ENCODE measurements at regions of chr10 and their contacts with region 1.

Region 1: GRCh38 chr10:73848821-73849489 is 25.4 kb downstream of the CAMK2G start:
- DNase-seq: peak; percentile 87 to 92 (median 89)
- H3K4me3 ChIP-seq: no peak overlapping the region
- H3K4me3 Mint-ChIP-seq: peak overlapping the region in 5 of 8 donors; percentile 26 to 59 (median 27)
- H3K27ac ChIP-seq: peak overlapping the region; percentile 46
- H3K27ac Mint-ChIP-seq: peak overlapping the region; percentile 83 to 96 (median 94)
- H3K4me1 ChIP-seq: peaks cover 8% of the 10 kb centered on the region
- H3K4me1 Mint-ChIP-seq: peaks cover 14 to 28% (median 16%) of the 10 kb centered on the region in 4 donors
- H3K27me3 ChIP-seq: no peaks in the 10 kb centered on the region
- H3K27me3 Mint-ChIP-seq: no peaks in the 10 kb centered on the region

Region 2: DNA sequence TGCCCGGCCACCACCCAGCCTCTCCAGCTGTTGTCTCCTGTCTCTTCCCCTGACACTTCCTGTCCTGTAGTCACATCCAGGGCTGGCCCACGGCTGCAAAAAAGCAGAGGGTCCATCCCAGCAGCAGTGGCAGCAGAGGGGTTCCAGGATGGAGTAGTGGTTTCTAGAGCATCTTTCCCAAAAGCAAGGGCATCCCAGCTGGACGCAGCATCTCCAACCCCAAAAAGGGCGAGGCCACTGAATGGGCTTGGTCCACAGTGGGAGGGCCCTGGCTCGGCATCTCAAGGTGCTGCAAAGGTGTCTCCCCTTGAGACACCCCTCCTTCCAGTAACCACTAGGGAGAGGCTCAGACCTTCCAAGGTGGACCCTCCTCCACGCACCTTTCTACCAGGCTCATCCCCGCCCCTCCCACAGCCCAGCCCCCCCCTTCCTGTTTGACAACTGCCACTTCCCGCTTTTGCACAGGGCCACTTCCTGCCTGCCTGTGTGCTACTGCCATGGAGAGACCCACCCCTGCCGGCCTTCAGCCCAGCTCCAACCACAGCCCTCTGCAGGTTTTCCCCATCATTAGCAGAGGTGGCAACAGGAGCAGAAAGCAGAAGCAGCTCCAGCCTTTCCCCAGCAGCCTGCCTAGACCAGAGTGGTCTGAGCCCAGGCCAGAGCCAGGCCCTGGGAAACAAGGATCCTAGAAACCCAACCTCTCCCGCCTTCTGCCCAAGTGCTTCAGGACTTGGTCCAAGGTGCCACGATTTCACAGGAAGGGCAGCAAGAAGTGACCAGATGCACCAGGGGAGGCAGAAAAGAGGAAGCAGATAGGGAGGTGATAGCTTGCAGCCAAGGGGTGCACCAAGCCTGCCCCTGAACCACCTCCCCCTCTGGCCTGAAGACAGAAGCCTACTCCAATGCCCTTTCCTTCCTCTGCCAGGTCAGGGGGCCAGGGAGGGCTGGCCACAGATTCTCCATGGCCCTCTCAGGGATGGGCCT is 16.8 kb after region 1 on chr10:
- CTCF ChIA-PET with region 1: interaction called, 38 read pairs
- POLR2A ChIA-PET with region 1: interaction called, 16 read pairs
- intact Hi-C with region 1: no loop called
- DNase-seq: peak; percentile 31 to 61 (median 44)
- H3K4me3 ChIP-seq: peak overlapping the region; percentile 56 to 65
- H3K4me3 Mint-ChIP-seq: peak overlapping the region; percentile 84 to 93 (median 86)
- H3K27ac ChIP-seq: peak overlapping the region; percentile 64
- H3K27ac Mint-ChIP-seq: peak overlapping the region; percentile 88 to 98 (median 94)
- H3K4me1 ChIP-seq: peaks cover 87% of the 10 kb centered on the region
- H3K4me1 Mint-ChIP-seq: peaks cover 47 to 97% (median 81%) of the 10 kb centered on the region in 4 donors
- H3K27me3 ChIP-seq: no peaks in the 10 kb centered on the region
- H3K27me3 Mint-ChIP-seq: no peaks in the 10 kb centered on the region

Region 3: DNA sequence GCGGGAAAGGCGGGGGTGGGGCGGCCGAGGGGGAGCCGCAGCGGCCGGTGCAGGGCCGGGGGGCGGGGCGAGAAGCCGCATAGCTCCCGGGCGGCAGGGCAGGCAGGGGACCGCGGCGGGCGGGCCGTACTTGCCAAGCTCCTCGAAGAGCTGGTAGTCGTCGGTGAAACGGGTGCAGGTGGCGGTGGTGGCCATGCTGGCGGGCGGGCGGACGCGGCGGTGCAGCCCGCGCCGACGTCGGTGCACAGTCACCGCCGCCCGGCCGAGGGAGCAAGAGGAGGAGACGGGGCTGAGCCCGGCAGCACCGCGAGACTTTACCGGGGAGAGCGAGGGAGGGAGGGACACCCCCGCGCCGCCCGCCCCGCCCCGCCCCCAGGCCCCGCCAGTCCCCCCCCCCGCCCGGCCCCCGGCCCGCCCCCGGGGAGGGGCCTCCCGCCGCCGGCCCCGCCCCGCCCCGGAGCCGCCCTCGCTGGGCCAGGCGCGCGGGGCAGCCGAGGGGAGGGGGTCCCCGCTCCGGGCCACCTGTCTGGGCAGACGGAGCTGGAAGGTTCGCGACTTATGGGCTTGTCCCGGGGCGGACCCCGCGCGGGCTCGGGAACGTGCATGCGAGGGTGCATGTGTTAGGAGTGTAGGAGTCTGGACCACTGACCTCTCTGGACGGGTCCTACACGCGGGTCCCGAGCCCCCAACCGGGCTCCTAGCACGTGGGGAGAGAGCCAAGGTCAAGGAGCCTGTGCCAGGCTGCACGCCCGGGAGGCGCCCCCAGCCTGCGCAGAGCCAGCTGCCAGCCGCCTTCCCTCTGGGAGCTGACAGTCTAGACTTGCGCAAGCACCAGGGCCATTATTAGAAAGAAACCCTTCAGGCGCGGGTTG is 25.5 kb after region 1 on chr10 and contains the start of gene CAMK2G:
- CTCF ChIA-PET with region 1: interaction called, 612 read pairs
- POLR2A ChIA-PET with region 1: interaction called, 57 read pairs
- intact Hi-C with region 1: loop called (anchors 1 kb)
- DNase-seq: peak; percentile 83 to 87 (median 86)
- H3K4me3 ChIP-seq: peak within 1 kb of the TSS; percentile 61 to 72
- H3K4me3 Mint-ChIP-seq: peak within 1 kb of the TSS; percentile 86 to 97 (median 94)
- H3K27ac ChIP-seq: peak within 1 kb of the TSS; percentile 78
- H3K27ac Mint-ChIP-seq: peak within 1 kb of the TSS; percentile 87 to 99 (median 96)
- H3K4me1 ChIP-seq: peaks cover 65% of the 10 kb centered on the region
- H3K4me1 Mint-ChIP-seq: peaks cover 43 to 79% (median 58%) of the 10 kb centered on the region in 4 donors
- H3K27me3 ChIP-seq: no peaks in the 10 kb centered on the region
- H3K27me3 Mint-ChIP-seq: no peaks in the 10 kb centered on the region
- total RNA-seq, gene CAMK2G: 64.3 to 70.4 TPM

Region 4: GRCh38 chr10:73899423-73899822 is 50.5 kb after region 1 on chr10:
- CTCF ChIA-PET with region 1: no interaction called
- POLR2A ChIA-PET with region 1: no interaction called
- intact Hi-C with region 1: no loop called
- DNase-seq: no peak
- H3K4me3 ChIP-seq: no peak overlapping the region
- H3K4me3 Mint-ChIP-seq: no peak overlapping the region
- H3K27ac ChIP-seq: no peak overlapping the region
- H3K27ac Mint-ChIP-seq: peak overlapping the region in 1 of 7 donors; percentile 29
- H3K4me1 ChIP-seq: no peaks in the 10 kb centered on the region
- H3K4me1 Mint-ChIP-seq: no peaks in the 10 kb centered on the region
- H3K27me3 ChIP-seq: no peaks in the 10 kb centered on the region
- H3K27me3 Mint-ChIP-seq: peaks cover 3 to 8% of the 10 kb centered on the region in 2 donors

Region 5: GRCh38 chr10:73910764-73911552 is 62.0 kb after region 1 on chr10 and contains the start of gene PLAU:
- CTCF ChIA-PET with region 1: no interaction called
- POLR2A ChIA-PET with region 1: no interaction called
- intact Hi-C with region 1: no loop called
- DNase-seq: peak; percentile 31 to 50 (median 38)
- H3K4me3 ChIP-seq: peak within 1 kb of the TSS; percentile 11 to 44
- H3K4me3 Mint-ChIP-seq: peak within 1 kb of the TSS; percentile 89 to 95 (median 92)
- H3K27ac ChIP-seq: no peak within 1 kb of the TSS
- H3K27ac Mint-ChIP-seq: peak within 1 kb of the TSS in 2 of 7 donors; percentile 29 to 41
- H3K4me1 ChIP-seq: peaks cover 29% of the 10 kb centered on the region
- H3K4me1 Mint-ChIP-seq: peaks cover 16 to 36% (median 25%) of the 10 kb centered on the region in 4 donors
- H3K27me3 ChIP-seq: peaks cover 13% of the 10 kb centered on the region
- H3K27me3 Mint-ChIP-seq: peaks cover 20 to 24% of the 10 kb centered on the region in 2 donors
- total RNA-seq, gene PLAU: 0.64 to 0.91 TPM

Region 6: DNA sequence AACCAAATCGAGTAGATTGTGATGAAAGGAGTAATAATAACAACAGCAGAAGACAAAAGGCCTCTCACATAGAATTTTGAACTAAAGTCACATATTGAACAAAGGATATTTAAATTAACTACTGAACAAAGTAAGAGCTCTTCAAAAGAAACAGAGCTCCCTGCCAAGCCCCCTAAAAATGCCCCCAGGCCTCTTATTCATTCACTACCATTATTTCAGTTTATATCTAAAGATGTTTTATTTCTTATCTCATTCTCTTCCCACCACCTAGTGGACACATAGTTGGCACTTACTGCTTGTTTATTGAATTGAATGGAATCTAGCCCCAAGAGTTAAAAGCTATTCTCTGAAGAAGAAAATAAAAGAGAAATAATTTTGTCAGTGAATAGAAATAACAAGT is 186.3 kb after region 1 on chr10:
- CTCF ChIA-PET with region 1: interaction called, 10 read pairs
- POLR2A ChIA-PET with region 1: no interaction called
- intact Hi-C with region 1: no loop called
- DNase-seq: peak in 1 of 5 donors; percentile 14
- H3K4me3 ChIP-seq: no peak overlapping the region
- H3K4me3 Mint-ChIP-seq: no peak overlapping the region
- H3K27ac ChIP-seq: no peak overlapping the region
- H3K27ac Mint-ChIP-seq: peak overlapping the region in 6 of 7 donors; percentile 31 to 90 (median 80)
- H3K4me1 ChIP-seq: peaks cover 41% of the 10 kb centered on the region
- H3K4me1 Mint-ChIP-seq: peaks cover 43 to 64% (median 48%) of the 10 kb centered on the region in 4 donors
- H3K27me3 ChIP-seq: no peaks in the 10 kb centered on the region
- H3K27me3 Mint-ChIP-seq: no peaks in the 10 kb centered on the region